GM12878 (cell line): ENCODE measurements at regions of chr3 and their contacts with region 1.

Region 1: GRCh38 chr3:114152519-114153151 is 26.2 kb downstream of the DRD3 start:
- DNase-seq: peak; percentile 33
- ATAC-seq: peak; percentile 94
- H3K4me3 ChIP-seq: peak overlapping the region; percentile 45; the same call in 1 of the 2 replicates
- H3K27ac ChIP-seq: no peak overlapping the region
- H3K4me1 ChIP-seq: no peaks in the 10 kb centered on the region; the same call in 1 of the 2 replicates
- H3K27me3 ChIP-seq: 0 out of 4 replicates have a peak, but pooled peaks cover 0 to 1% of the 10 kb centered on the region in 2 experiments
- CTCF ChIP-seq: peak; percentile 86 to 95 (median 94)
- EP300 ChIP-seq: 0 out of 4 replicates have a peak, but pooled peaks of 1 of the 2 experiments have one; percentile 3
- POLR2A ChIP-seq: no peak
- RAD21 ChIP-seq: peak; percentile 93

Region 2: GRCh38 chr3:114005481-114005880 is 147.2 kb before region 1 on chr3:
- CTCF ChIA-PET with region 1: interaction called, 13 read pairs
- POLR2A ChIA-PET with region 1: no interaction called
- RAD21 ChIA-PET with region 1: no interaction called
- SMC1A ChIA-PET with region 1: no interaction called
- in situ Hi-C with region 1: no loop called
- intact Hi-C with region 1: no loop called
- DNase-seq: peak; percentile 35
- ATAC-seq: peak; percentile 94
- H3K4me3 ChIP-seq: no peak overlapping the region
- H3K27ac ChIP-seq: no peak overlapping the region
- H3K4me1 ChIP-seq: no peaks in the 10 kb centered on the region
- H3K27me3 ChIP-seq: no peaks in the 10 kb centered on the region
- CTCF ChIP-seq: peak; percentile 7 to 21 (median 9); a peak in 4 of 6 replicates
- EP300 ChIP-seq: no peak
- POLR2A ChIP-seq: no peak
- RAD21 ChIP-seq: 0 out of 2 replicates have a peak, but pooled peaks have one; percentile 12

Region 3: DNA sequence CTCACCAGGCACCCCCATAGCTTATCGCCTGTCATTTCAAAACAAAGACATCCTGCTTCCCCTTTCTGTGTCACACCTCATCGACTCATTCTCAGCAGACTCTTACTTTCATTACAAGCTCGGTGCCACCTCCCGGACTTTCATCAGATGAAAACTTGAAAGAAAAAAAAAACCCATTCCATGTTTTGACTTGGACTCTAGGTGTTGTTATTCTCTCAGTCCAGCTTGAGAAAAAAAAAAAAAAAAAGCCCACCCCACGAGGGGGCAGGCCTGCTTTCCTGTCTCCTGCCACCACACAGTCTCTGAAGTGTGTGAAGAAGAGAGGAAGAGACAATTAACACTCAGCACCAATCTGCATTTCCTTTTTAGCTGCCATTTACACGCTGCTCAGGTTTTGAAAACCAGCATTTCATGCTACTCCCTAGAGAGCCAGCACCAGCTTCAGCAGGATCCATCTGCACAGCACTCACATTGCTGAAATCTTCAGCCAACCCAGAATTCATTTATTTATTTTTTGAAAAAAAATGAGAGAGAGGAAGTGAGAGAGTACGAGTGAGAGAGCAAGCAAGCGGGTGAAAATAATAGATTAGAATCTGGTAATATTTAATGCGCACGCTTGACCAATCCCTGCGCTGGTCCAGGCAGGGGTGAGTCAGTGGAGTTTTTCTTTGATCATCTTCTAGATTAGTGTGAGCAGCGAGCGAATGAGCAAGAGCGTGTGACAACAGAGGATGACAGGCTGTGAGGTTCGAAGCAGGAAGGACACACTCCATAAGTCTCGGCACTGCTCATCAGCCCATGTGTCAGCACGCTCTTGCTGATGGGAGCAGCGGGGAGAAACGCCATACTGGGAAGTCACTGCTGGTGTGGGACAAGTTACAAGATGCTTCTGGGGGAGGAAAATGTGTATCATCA is 61.2 kb after region 1 on chr3:
- CTCF ChIA-PET with region 1: interaction called, 6 read pairs
- POLR2A ChIA-PET with region 1: no interaction called
- RAD21 ChIA-PET with region 1: interaction called, 6 read pairs
- SMC1A ChIA-PET with region 1: no interaction called
- in situ Hi-C with region 1: no loop called
- intact Hi-C with region 1: loop called (anchors 2 kb)
- DNase-seq: peak; percentile 84
- ATAC-seq: peak; percentile 91
- H3K4me3 ChIP-seq: peak overlapping the region; percentile 63
- H3K27ac ChIP-seq: peak overlapping the region; percentile 88
- H3K4me1 ChIP-seq: peaks cover 20% of the 10 kb centered on the region
- H3K27me3 ChIP-seq: no peaks in the 10 kb centered on the region; a peak in 1 of 4 replicates
- CTCF ChIP-seq: no peak
- EP300 ChIP-seq: peak; percentile 86 to 91
- POLR2A ChIP-seq: peak; percentile 74
- RAD21 ChIP-seq: no peak

Region 4: GRCh38 chr3:114362815-114363214 is 210.2 kb after region 1 on chr3:
- CTCF ChIA-PET with region 1: interaction called, 3 read pairs
- POLR2A ChIA-PET with region 1: no interaction called
- RAD21 ChIA-PET with region 1: no interaction called
- SMC1A ChIA-PET with region 1: no interaction called
- in situ Hi-C with region 1: no loop called
- intact Hi-C with region 1: loop called (anchors 5 kb)
- DNase-seq: no peak
- ATAC-seq: peak; percentile 87
- H3K4me3 ChIP-seq: no peak overlapping the region
- H3K27ac ChIP-seq: no peak overlapping the region
- H3K4me1 ChIP-seq: no peaks in the 10 kb centered on the region
- H3K27me3 ChIP-seq: no peaks in the 10 kb centered on the region
- CTCF ChIP-seq: peak in 2 of 3 experiments; percentile 37 to 51; a peak in 4 of 6 replicates
- EP300 ChIP-seq: no peak
- POLR2A ChIP-seq: no peak
- RAD21 ChIP-seq: peak; percentile 57

Region 5: GRCh38 chr3:114418724-114419543 is 266.3 kb after region 1 on chr3:
- CTCF ChIA-PET with region 1: interaction called, 90 read pairs
- POLR2A ChIA-PET with region 1: no interaction called
- RAD21 ChIA-PET with region 1: interaction called, 14 read pairs
- SMC1A ChIA-PET with region 1: interaction called, 24 read pairs
- in situ Hi-C with region 1: loop called (anchors 5 kb)
- intact Hi-C with region 1: loop called (anchors 1 kb)
- DNase-seq: no peak
- ATAC-seq: peak; percentile 96
- H3K4me3 ChIP-seq: no peak overlapping the region
- H3K27ac ChIP-seq: no peak overlapping the region; the same call in 1 of the 2 replicates
- H3K4me1 ChIP-seq: peaks cover 9% of the 10 kb centered on the region
- H3K27me3 ChIP-seq: no peaks in the 10 kb centered on the region
- CTCF ChIP-seq: peak; percentile 68 to 76 (median 75)
- EP300 ChIP-seq: no peak
- POLR2A ChIP-seq: no peak
- RAD21 ChIP-seq: peak; percentile 86